SK-N-SH (cell line): ENCODE measurements at regions of chr10 and their contacts with region 1.

Region 1: DNA sequence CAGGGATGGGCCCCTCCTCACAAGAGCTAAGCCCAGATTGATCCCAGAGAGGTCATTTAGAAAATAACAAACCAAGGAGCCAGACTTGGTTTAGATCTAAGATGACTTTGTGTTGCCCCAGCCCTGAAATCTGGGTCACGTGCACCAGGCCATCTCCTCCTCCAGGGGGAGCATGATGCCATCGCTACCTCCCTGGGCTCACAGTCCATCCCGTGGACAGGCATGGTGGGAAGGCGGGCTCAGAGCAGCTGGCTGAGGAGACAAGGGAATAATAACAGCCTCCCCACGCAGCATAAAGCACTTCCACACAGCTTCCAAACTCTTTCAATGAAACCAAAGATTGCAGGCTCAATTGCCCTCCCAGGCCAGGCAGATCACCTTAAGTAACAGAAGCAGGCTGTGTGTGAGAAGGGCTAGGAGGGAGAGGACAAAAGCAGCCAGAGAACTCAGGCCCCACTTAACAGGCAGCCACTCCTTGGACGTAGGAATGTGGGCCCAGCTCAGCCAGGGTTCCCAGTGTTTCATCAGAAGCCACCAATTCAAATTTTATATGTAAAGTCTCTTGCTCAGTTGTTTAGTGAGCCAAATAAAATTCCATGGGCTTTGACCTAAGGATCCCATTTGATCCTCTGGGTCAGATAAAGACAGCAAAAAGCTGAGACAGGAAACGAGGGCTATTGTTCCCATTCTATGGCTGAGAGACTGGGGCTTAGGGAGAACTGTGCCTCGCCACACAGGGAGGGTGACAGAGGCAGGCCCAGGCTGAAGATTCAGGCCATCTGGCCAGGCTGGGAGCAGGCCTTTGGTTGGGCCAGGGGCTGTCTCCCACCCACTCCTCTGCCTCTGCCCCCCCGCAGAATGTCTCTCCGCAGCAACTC is 100.2 kb downstream of the COL13A1 start:
- DNase-seq: peak; percentile 92
- H3K4me3 ChIP-seq: no peak overlapping the region
- H3K27ac ChIP-seq: no peak overlapping the region
- H3K4me1 ChIP-seq: peaks cover 0 to 9% of the 10 kb centered on the region in 2 experiments; a peak in 1 of 4 replicates
- H3K27me3 ChIP-seq: no peaks in the 10 kb centered on the region
- CTCF ChIP-seq: peak; percentile 69
- EP300 ChIP-seq: no peak
- RAD21 ChIP-seq: peak; percentile 68

Region 2: GRCh38 chr10:69842020-69842419 is 59.8 kb before region 1 on chr10:
- CTCF ChIA-PET with region 1: no interaction called
- POLR2A ChIA-PET with region 1: no interaction called
- DNase-seq: no peak
- H3K4me3 ChIP-seq: no peak overlapping the region
- H3K27ac ChIP-seq: no peak overlapping the region
- H3K4me1 ChIP-seq: peaks cover 26% of the 10 kb centered on the region in 2 experiments
- H3K27me3 ChIP-seq: no peaks in the 10 kb centered on the region
- CTCF ChIP-seq: no peak
- EP300 ChIP-seq: no peak
- RAD21 ChIP-seq: no peak

Region 3: DNA sequence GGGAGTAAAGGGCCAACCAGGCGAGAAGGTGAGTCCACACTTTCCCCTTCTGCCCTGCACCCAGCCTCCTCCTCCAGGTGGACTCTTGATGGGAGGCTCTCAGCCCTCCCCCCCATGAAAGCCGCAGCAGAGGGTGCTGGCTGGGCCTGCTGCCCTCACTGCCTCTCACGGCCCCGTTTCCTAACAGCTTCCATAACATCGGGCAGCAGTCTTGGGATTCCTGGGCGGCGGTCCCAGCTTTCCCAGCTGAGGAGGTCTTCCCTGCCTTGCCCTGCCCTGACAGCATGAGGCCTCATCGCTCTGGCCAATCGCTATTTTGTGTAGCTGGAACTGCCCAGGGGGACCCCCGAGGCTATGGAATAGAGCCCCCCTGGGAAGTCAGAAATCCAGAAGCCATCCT is 23.8 kb before region 1 on chr10:
- CTCF ChIA-PET with region 1: interaction called, 15 read pairs
- POLR2A ChIA-PET with region 1: no interaction called
- DNase-seq: no peak
- H3K4me3 ChIP-seq: no peak overlapping the region
- H3K27ac ChIP-seq: no peak overlapping the region
- H3K4me1 ChIP-seq: peaks cover 2 to 13% of the 10 kb centered on the region in 2 experiments; a peak in 2 of 4 replicates
- H3K27me3 ChIP-seq: no peaks in the 10 kb centered on the region
- CTCF ChIP-seq: no peak
- EP300 ChIP-seq: no peak
- RAD21 ChIP-seq: no peak

Region 4: DNA sequence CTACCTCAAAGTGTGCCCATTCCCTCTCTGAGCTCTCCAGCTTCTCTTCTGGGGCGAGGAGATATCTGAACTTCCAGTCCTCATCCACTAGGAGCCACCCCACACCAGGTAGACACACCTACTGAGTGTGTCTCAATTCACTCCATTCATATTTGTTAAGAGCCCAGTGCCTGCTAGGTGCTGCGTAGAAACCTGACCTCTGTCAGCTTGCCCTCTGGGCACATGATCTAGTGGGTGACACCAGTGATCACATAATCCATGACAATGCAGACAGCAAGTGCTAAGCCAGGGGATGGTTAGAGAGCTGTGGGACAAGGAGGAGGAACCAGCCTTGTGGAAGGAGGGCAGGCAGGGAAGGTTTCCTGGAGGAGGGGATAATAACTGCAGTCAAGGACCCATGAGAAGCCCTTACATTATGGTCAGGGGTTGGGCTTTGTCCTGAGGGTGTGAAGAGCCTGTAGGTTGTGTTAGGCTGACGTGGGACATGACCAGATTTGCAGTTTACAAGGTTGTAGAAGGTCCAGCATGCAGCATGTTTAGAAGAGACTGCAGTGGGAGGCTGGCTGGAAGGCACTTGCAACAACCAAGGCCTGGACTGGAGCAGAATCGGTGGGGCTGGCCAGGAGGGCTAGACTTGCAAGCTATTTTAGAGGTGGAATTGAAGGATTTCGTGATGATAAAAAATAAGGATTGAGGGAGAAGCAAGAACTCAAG is 18.4 kb before region 1 on chr10:
- CTCF ChIA-PET with region 1: interaction called, 15 read pairs
- POLR2A ChIA-PET with region 1: no interaction called
- DNase-seq: no peak
- H3K4me3 ChIP-seq: no peak overlapping the region
- H3K27ac ChIP-seq: no peak overlapping the region
- H3K4me1 ChIP-seq: no peaks in the 10 kb centered on the region; a peak in 1 of 4 replicates
- H3K27me3 ChIP-seq: no peaks in the 10 kb centered on the region
- CTCF ChIP-seq: no peak
- EP300 ChIP-seq: no peak
- RAD21 ChIP-seq: no peak

Region 5: DNA sequence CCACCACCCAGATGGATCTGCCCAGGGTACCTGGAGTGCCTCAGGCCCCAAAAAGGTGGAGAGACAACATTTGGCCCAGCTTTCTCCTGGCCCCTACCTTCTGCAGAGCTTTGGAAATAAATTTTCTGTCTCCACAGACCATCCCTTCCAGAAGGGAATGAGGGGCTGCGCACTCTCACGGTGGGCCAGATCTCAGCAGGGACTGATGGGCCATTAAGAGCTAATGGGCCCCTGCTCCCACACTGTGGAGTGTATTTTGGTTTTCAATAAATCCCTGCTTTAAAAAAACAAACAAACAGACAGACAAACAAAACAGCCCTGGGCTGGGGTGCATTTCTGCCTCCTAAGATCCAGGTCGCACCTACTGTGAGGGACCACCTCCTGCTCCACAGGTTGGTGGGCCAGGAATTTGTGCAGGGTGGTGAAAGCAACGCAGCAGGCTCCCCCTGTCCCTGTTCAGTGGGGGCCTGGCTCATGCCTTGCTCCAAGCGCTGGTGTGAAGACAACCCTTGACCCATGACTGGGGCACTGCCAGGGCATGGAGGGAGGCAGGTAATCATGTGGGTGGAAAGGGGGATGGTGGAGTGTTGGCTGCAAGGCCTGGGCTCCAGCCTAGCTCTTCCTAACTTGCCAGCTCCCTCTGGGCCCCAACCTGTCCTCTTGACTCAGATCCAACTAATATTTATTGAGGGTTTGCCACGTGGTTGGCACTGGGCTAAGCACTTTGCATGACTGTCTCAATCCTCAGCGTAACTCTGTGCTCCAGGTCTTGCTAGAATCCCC is 11.6 kb before region 1 on chr10:
- CTCF ChIA-PET with region 1: interaction called, 13 read pairs
- POLR2A ChIA-PET with region 1: no interaction called
- DNase-seq: no peak
- H3K4me3 ChIP-seq: no peak overlapping the region
- H3K27ac ChIP-seq: no peak overlapping the region
- H3K4me1 ChIP-seq: peaks cover 0 to 3% of the 10 kb centered on the region in 2 experiments; a peak in 1 of 4 replicates
- H3K27me3 ChIP-seq: no peaks in the 10 kb centered on the region
- CTCF ChIP-seq: no peak
- EP300 ChIP-seq: no peak
- RAD21 ChIP-seq: no peak

Region 6: GRCh38 chr10:69938541-69938991 is 36.7 kb after region 1 on chr10:
- CTCF ChIA-PET with region 1: no interaction called
- POLR2A ChIA-PET with region 1: no interaction called
- DNase-seq: no peak
- H3K4me3 ChIP-seq: no peak overlapping the region
- H3K27ac ChIP-seq: no peak overlapping the region
- H3K4me1 ChIP-seq: no peaks in the 10 kb centered on the region
- H3K27me3 ChIP-seq: no peaks in the 10 kb centered on the region
- CTCF ChIP-seq: no peak
- EP300 ChIP-seq: no peak
- RAD21 ChIP-seq: no peak

Region 7: GRCh38 chr10:69957886-69958555 is 56.2 kb after region 1 on chr10:
- CTCF ChIA-PET with region 1: interaction called, 12 read pairs
- POLR2A ChIA-PET with region 1: no interaction called
- DNase-seq: peak; percentile 73
- H3K4me3 ChIP-seq: no peak overlapping the region
- H3K27ac ChIP-seq: no peak overlapping the region
- H3K4me1 ChIP-seq: peaks cover 0 to 5% of the 10 kb centered on the region in 2 experiments; a peak in 1 of 4 replicates
- H3K27me3 ChIP-seq: no peaks in the 10 kb centered on the region
- CTCF ChIP-seq: peak; percentile 81
- EP300 ChIP-seq: no peak
- RAD21 ChIP-seq: peak; percentile 69

Region 8: GRCh38 chr10:70430493-70431445 is 528.9 kb after region 1 on chr10:
- CTCF ChIA-PET with region 1: no interaction called
- POLR2A ChIA-PET with region 1: no interaction called
- DNase-seq: no peak
- H3K4me3 ChIP-seq: no peak overlapping the region
- H3K27ac ChIP-seq: no peak overlapping the region
- H3K4me1 ChIP-seq: peaks cover 0 to 7% of the 10 kb centered on the region in 2 experiments; a peak in 1 of 4 replicates
- H3K27me3 ChIP-seq: no peaks in the 10 kb centered on the region
- CTCF ChIP-seq: no peak
- EP300 ChIP-seq: no peak
- RAD21 ChIP-seq: no peak